HCT116 (cell line): ENCODE measurements at regions of chr3 and their contacts with region 1.

Region 1: GRCh38 chr3:80688814-80689213 is 921.0 kb upstream of the ROBO1 start:
- DNase-seq: no peak
- ATAC-seq: no peak
- H3K4me3 ChIP-seq: no peak overlapping the region
- H3K27ac ChIP-seq: no peak overlapping the region
- H3K4me1 ChIP-seq: no peaks in the 10 kb centered on the region
- H3K27me3 ChIP-seq: no peaks in the 10 kb centered on the region
- CTCF ChIP-seq: no peak
- POLR2A ChIP-seq: no peak
- RAD21 ChIP-seq: no peak

Region 2: DNA sequence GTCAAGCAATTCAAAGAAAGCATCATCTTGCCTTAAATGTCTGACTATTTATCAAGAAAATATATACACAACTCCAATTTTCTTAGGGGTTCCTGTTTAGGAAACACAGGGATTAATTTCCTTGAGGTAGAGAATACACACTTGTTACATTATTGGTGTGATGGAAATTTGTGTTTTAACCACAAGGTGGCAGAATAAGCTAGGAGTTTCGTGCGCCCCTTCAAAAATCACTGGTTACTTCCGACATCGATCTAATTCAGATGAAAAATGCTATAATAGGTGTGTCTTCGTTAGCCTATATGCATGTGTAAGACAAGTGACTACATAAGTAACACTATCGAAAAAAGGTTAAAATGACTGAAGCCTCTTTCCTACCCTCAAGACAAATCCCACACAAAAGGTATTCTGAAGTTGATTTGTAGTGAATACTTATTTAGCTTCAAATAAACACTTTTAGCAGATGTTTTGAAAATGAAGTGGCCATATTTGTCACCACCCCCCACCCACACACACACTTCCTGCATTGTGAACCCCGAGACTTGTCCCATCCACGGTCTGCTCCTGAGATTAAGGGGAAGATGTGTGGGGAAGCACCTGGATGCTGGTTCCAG is 1167.5 kb before region 1 on chr3:
- CTCF ChIA-PET with region 1: no interaction called
- POLR2A ChIA-PET with region 1: no interaction called
- RAD21 ChIA-PET with region 1: no interaction called
- intact Hi-C with region 1: loop called (anchors 10 kb)
- DNase-seq: peak; percentile 8
- ATAC-seq: no peak
- H3K4me3 ChIP-seq: no peak overlapping the region
- H3K27ac ChIP-seq: no peak overlapping the region
- H3K4me1 ChIP-seq: no peaks in the 10 kb centered on the region
- H3K27me3 ChIP-seq: no peaks in the 10 kb centered on the region
- CTCF ChIP-seq: peak in 2 of 3 experiments; percentile 21 to 55; a peak in 3 of 6 replicates
- POLR2A ChIP-seq: no peak
- RAD21 ChIP-seq: peak; percentile 36